Transverse colon (tissue), 4 donors: ENCODE measurements at regions of chr7 and their contacts with region 1.

Region 1: GRCh38 chr7:151113344-151114150 is 27.3 kb downstream of the AGAP3 start:
- DNase-seq: no peak
- H3K4me3 ChIP-seq: no peak overlapping the region
- H3K27ac ChIP-seq: no peak overlapping the region
- H3K4me1 ChIP-seq: peaks cover 17 to 50% (median 31%) of the 10 kb centered on the region in 4 donors
- H3K27me3 ChIP-seq: no peaks in the 10 kb centered on the region
- CTCF ChIP-seq: no peak
- EP300 ChIP-seq: no peak
- POLR2A ChIP-seq: no peak

Region 2: DNA sequence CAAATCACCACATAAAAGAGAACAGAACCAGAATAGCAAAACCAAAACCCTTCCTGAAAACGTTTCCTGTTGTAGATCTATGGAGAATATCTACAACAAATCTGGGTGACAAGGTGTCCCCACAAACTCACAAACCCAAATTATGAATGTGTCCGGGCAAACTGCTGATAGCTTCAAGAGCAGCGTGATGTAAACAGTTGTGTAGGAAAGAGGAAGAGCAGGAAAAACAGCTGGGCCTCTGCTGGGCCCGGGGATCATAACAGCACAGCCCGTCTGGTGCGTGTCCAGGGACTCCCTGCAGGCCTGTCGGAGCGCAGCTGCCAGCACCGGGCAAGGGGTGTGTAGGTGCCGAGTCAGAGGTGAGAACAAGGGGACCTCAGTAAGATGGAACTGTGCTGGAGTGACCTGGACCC is 189.2 kb before region 1 on chr7:
- in situ Hi-C with region 1: no loop called
- intact Hi-C with region 1: no loop called
- DNase-seq: no peak
- H3K4me3 ChIP-seq: no peak overlapping the region
- H3K27ac ChIP-seq: no peak overlapping the region
- H3K4me1 ChIP-seq: peaks cover 5 to 16% (median 13%) of the 10 kb centered on the region in 4 donors
- H3K27me3 ChIP-seq: no peaks in the 10 kb centered on the region
- CTCF ChIP-seq: no peak
- EP300 ChIP-seq: no peak
- POLR2A ChIP-seq: no peak

Region 3: GRCh38 chr7:151053096-151053495 is 60.5 kb before region 1 on chr7:
- in situ Hi-C with region 1: no loop called
- intact Hi-C with region 1: loop called (anchors 2 kb)
- DNase-seq: no peak
- H3K4me3 ChIP-seq: no peak overlapping the region
- H3K27ac ChIP-seq: no peak overlapping the region
- H3K4me1 ChIP-seq: peaks cover 6 to 18% (median 16%) of the 10 kb centered on the region in 4 donors
- H3K27me3 ChIP-seq: peaks cover 8% of the 10 kb centered on the region
- CTCF ChIP-seq: no peak
- EP300 ChIP-seq: no peak
- POLR2A ChIP-seq: no peak

Region 4: GRCh38 chr7:151705636-151706276 is 592.2 kb after region 1 on chr7:
- in situ Hi-C with region 1: no loop called
- intact Hi-C with region 1: no loop called
- DNase-seq: peak; percentile 32
- H3K4me3 ChIP-seq: no peak overlapping the region
- H3K27ac ChIP-seq: peak overlapping the region in 2 of 4 donors; percentile 3 to 17
- H3K4me1 ChIP-seq: peaks cover 0 to 11% (median 2%) of the 10 kb centered on the region in 4 donors
- H3K27me3 ChIP-seq: no peaks in the 10 kb centered on the region
- CTCF ChIP-seq: peak; percentile 24 to 42 (median 32)
- EP300 ChIP-seq: no peak
- POLR2A ChIP-seq: no peak